ENCODE measurements at regions of chr15 and their contacts with region 1.

Region 1: DNA sequence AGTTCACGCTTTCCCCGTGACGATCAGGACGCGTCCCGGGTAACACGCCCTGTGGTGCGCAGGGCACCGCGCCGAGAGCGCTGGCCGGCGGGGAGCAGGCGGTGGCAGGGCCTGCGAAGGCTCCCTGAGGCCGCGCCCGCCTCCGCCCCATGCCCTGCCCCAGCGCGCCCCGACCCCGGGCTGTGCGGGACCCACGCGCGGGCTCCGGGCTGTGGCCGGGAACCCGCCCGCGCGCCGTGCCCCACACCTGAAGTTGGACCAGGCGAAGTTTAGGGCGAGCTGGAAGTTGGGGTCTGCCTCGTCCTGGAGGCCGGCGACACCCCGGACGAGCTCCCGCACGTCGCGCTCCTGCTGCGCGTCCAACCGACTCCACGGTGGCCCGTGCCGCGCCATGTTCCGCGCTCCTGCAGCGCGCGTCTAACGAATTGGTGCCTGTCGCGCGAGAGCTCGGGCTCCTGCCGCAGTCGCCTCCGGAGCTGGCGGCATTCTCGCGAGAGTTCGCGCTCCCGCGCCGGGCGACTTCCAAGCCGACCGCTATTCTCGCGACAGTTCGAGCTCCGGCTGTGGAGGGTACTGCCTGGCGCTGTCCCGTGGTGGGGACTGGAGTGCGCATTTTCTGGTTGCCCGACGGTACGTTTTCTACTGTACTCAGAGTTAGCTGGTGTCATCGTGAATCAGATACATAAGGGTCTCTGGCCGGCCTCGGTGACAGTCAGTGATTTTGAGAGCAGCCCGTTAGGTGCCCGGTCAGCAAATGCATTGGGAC is at the start of gene TUBGCP5:
- DNase-seq: peak; percentile 85
- ATAC-seq: peak; percentile 96
- H3K4me3 Mint-ChIP-seq: peak within 1 kb of the TSS; percentile 92
- H3K27ac Mint-ChIP-seq: peak within 1 kb of the TSS; percentile 88
- H3K4me1 Mint-ChIP-seq: peaks cover 12% of the 10 kb centered on the region
- H3K27me3 Mint-ChIP-seq: no peaks in the 10 kb centered on the region
- CTCF ChIP-seq: no peak
- total RNA-seq, gene TUBGCP5: 21.7 and 26.2 TPM in 2 replicates

Region 2: DNA sequence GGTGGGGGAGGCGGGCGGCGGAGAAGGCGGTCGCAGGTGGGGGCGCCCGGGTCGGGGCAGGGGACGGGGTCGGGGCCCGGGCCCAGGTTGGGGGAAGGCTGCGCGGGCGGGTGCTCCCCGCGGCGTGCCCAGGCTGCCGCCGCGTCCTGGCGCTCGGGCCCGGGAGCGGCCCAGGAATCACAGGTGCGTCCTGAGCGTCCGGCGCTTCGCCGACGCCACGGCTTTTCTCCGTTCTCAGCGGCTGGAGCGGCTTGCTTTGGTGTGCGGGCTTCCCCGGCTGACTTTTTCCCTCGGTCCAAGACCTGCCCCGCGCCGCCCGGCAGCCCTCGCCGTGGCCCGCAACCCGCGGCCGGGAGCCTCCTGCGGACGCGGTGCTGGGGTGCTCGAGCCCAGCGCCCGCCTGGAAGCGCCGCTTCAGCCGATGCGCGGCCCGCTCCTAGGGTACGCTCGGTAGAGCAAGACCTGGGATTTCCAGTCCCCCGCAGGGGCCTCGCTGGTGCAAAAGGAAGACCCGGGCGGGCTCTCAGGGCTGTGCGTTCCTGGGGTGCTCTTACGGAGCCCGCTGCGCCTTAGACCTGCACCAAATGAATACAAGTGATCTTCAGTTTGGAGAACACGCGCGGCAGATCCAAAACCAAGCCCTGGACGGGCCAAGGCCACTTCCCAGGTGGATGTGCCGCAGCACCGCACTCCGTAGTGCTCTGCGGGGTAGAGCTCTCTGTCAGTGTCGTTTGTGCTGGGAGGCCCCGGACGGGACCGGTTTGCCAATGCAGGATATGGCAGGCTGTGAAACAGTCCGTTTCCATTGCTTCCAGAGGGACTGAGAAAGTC is 252.3 kb before region 1 on chr15:
- CTCF ChIA-PET with region 1: no interaction called
- POLR2A ChIA-PET with region 1: interaction called, 7 read pairs
- intact Hi-C with region 1: loop called (anchors 2 kb)
- DNase-seq: peak; percentile 52
- ATAC-seq: peak; percentile 10
- H3K4me3 Mint-ChIP-seq: peak overlapping the region; percentile 86
- H3K27ac Mint-ChIP-seq: peak overlapping the region; percentile 82
- H3K4me1 Mint-ChIP-seq: peaks cover 42% of the 10 kb centered on the region
- H3K27me3 Mint-ChIP-seq: no peaks in the 10 kb centered on the region
- CTCF ChIP-seq: no peak

Region 3: GRCh38 chr15:22978691-22979520 is 60.4 kb before region 1 on chr15:
- CTCF ChIA-PET with region 1: no interaction called
- POLR2A ChIA-PET with region 1: no interaction called
- intact Hi-C with region 1: loop called (anchors 2 kb)
- DNase-seq: peak; percentile 30
- ATAC-seq: peak; percentile 69
- H3K4me3 Mint-ChIP-seq: peak overlapping the region; percentile 83
- H3K27ac Mint-ChIP-seq: no peak overlapping the region
- H3K4me1 Mint-ChIP-seq: peaks cover 19% of the 10 kb centered on the region
- H3K27me3 Mint-ChIP-seq: peaks cover 8% of the 10 kb centered on the region
- CTCF ChIP-seq: no peak

Region 4: GRCh38 chr15:23064156-23064555 is 24.8 kb after region 1 on chr15:
- CTCF ChIA-PET with region 1: no interaction called
- POLR2A ChIA-PET with region 1: no interaction called
- intact Hi-C with region 1: no loop called
- DNase-seq: no peak
- ATAC-seq: no peak
- H3K4me3 Mint-ChIP-seq: no peak overlapping the region
- H3K27ac Mint-ChIP-seq: no peak overlapping the region
- H3K4me1 Mint-ChIP-seq: no peaks in the 10 kb centered on the region
- H3K27me3 Mint-ChIP-seq: no peaks in the 10 kb centered on the region
- CTCF ChIP-seq: no peak